SK-N-SH (cell line): ENCODE measurements at regions of chr9 and their contacts with region 1.

Region 1: GRCh38 chr9:36728651-36729520 is 156.2 kb downstream of the MELK start:
- DNase-seq: peak; percentile 83
- H3K4me3 ChIP-seq: peak overlapping the region in 1 of 2 experiments; percentile 29; a peak in 1 of 4 replicates
- H3K27ac ChIP-seq: no peak overlapping the region
- H3K4me1 ChIP-seq: no peaks in the 10 kb centered on the region
- H3K27me3 ChIP-seq: no peaks in the 10 kb centered on the region
- CTCF ChIP-seq: peak; percentile 85
- EP300 ChIP-seq: no peak
- RAD21 ChIP-seq: peak; percentile 94

Region 2: GRCh38 chr9:36597412-36598178 is 131.3 kb before region 1 on chr9:
- CTCF ChIA-PET with region 1: interaction called, 16 read pairs
- POLR2A ChIA-PET with region 1: no interaction called
- DNase-seq: peak; percentile 51
- H3K4me3 ChIP-seq: no peak overlapping the region
- H3K27ac ChIP-seq: peak overlapping the region in 1 of 2 experiments; percentile 16; a peak in 1 of 4 replicates
- H3K4me1 ChIP-seq: peaks cover 0 to 15% of the 10 kb centered on the region in 2 experiments; a peak in 1 of 4 replicates
- H3K27me3 ChIP-seq: no peaks in the 10 kb centered on the region
- CTCF ChIP-seq: peak; percentile 70
- EP300 ChIP-seq: no peak
- RAD21 ChIP-seq: peak; percentile 41

Region 3: DNA sequence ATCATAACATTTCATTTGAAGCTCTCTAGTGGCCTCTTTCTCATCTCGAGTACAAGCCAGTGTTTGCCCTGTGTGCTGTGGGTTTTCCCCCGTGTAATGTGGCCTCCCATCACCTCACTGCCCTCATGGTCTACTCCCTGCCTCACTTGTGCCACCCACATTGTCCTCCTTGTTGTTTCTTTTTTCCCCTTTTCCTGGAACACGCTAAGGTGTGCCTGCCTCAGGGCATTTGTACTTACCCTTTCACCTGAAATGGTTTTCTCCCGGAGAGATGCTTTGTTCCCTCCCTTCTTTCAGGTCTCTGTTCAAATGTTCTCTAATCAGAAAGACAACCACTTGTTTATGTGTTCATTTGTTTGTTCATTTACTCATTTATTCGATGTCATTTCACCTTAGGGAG is 115.9 kb before region 1 on chr9:
- CTCF ChIA-PET with region 1: interaction called, 11 read pairs
- POLR2A ChIA-PET with region 1: no interaction called
- DNase-seq: no peak
- H3K4me3 ChIP-seq: no peak overlapping the region
- H3K27ac ChIP-seq: no peak overlapping the region
- H3K4me1 ChIP-seq: no peaks in the 10 kb centered on the region
- H3K27me3 ChIP-seq: no peaks in the 10 kb centered on the region
- CTCF ChIP-seq: no peak
- EP300 ChIP-seq: no peak
- RAD21 ChIP-seq: no peak

Region 4: GRCh38 chr9:36625006-36625615 is 103.8 kb before region 1 on chr9:
- CTCF ChIA-PET with region 1: interaction called, 14 read pairs
- POLR2A ChIA-PET with region 1: no interaction called
- DNase-seq: no peak
- H3K4me3 ChIP-seq: no peak overlapping the region
- H3K27ac ChIP-seq: peak overlapping the region in 1 of 2 experiments; percentile 71; a peak in 2 of 4 replicates
- H3K4me1 ChIP-seq: peaks cover 0 to 10% of the 10 kb centered on the region in 2 experiments; a peak in 1 of 4 replicates
- H3K27me3 ChIP-seq: no peaks in the 10 kb centered on the region
- CTCF ChIP-seq: no peak
- EP300 ChIP-seq: no peak
- RAD21 ChIP-seq: no peak

Region 5: GRCh38 chr9:36632892-36633291 is 96.0 kb before region 1 on chr9:
- CTCF ChIA-PET with region 1: interaction called, 150 read pairs
- POLR2A ChIA-PET with region 1: no interaction called
- DNase-seq: peak; percentile 47
- H3K4me3 ChIP-seq: no peak overlapping the region
- H3K27ac ChIP-seq: no peak overlapping the region
- H3K4me1 ChIP-seq: no peaks in the 10 kb centered on the region
- H3K27me3 ChIP-seq: no peaks in the 10 kb centered on the region
- CTCF ChIP-seq: peak; percentile 77
- EP300 ChIP-seq: no peak
- RAD21 ChIP-seq: peak; percentile 67

Region 6: DNA sequence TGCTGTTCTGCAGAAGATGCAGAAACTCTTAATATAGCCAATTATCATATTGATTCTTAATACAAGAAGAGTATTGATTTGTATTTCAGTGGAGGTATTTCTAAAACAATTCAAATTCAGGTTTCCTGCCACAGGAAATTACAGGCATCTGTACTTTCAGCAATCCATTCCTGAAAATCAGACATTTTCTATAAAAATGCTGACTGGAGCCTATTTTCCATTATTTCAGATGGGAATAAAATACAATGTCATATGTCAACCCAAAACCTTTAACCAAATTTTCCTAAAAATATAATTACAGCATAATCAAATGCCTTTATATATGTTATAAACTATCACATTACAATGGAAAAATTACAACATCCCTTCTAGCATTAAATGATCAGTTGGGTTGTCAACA is 24.7 kb before region 1 on chr9:
- CTCF ChIA-PET with region 1: interaction called, 12 read pairs
- POLR2A ChIA-PET with region 1: no interaction called
- DNase-seq: no peak
- H3K4me3 ChIP-seq: no peak overlapping the region
- H3K27ac ChIP-seq: no peak overlapping the region
- H3K4me1 ChIP-seq: no peaks in the 10 kb centered on the region
- H3K27me3 ChIP-seq: peaks cover 10% of the 10 kb centered on the region; the same call in 1 of the 2 replicates
- CTCF ChIP-seq: no peak
- EP300 ChIP-seq: no peak
- RAD21 ChIP-seq: no peak

Region 7: DNA sequence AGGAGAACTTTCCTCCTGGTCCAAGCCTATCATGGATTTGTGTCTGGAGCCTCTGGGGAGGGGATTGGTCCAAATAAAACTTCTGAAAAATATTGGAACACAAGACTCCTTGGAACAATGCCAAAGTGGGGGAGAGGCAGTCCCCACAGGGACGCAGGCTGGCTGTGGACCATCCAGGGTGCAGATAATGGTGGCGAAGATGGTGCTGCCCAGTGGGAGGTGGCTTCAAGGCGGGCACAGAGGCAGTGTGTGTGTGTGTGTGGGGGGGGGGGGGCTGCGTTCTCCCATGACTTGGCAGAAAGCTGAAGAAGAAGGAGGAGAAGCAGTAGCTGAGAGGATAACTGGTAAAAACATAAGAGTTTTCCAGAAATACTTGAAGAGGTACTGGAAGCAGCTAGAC is 30.3 kb after region 1 on chr9:
- CTCF ChIA-PET with region 1: interaction called, 30 read pairs
- POLR2A ChIA-PET with region 1: no interaction called
- DNase-seq: no peak
- H3K4me3 ChIP-seq: no peak overlapping the region
- H3K27ac ChIP-seq: no peak overlapping the region
- H3K4me1 ChIP-seq: no peaks in the 10 kb centered on the region
- H3K27me3 ChIP-seq: peaks cover 42% of the 10 kb centered on the region
- CTCF ChIP-seq: no peak
- EP300 ChIP-seq: no peak
- RAD21 ChIP-seq: no peak